Left ventricle myocardium inferior (tissue), 1 donor: ENCODE measurements at regions of chr20 and their contacts with region 1.

Region 1: DNA sequence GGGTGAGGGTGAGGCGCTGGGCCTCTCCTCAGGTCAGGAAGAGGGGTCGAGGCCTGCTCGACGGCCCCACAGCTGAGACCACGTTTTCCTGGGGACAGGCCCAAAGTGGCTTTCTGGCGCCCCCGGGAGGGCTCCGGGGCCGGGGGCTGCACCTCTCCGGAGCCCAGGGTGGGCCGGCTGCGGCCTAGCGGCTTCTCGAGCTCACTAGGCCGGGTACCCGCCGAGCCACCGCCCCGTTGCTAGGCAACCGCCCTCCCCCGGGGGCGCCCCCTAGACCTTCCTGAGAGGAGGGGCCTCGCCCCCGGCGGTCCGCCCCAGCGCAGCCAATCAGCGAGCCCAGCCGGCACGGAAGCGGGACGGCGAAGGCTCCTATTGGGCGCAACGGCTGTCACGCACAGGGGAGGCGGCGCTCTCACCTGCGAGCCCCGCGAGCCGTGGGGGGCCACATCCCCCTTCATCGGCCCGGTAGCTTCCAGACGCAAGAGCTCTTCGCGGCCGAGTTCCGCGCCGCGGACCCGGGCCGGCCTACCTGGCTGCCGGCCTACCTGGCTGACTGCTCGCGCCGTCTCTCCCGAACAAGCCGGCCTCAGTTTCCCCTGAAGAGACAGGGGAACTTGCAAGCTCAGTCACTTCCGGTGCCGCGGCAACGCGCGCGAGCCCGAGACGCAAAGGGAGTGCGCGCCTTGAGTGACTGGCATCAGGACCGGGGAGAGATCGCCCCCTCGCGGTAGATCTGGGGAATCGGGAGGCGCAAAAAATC is 831 bp upstream of the BCL2L1 start:
- DNase-seq: peak; percentile 99
- H3K4me3 ChIP-seq: peak overlapping the region; percentile 85
- H3K27ac ChIP-seq: peak overlapping the region; percentile 99
- H3K4me1 ChIP-seq: peaks cover 48% of the 10 kb centered on the region
- H3K27me3 ChIP-seq: no peaks in the 10 kb centered on the region
- CTCF ChIP-seq: peak; percentile 94

Region 2: DNA sequence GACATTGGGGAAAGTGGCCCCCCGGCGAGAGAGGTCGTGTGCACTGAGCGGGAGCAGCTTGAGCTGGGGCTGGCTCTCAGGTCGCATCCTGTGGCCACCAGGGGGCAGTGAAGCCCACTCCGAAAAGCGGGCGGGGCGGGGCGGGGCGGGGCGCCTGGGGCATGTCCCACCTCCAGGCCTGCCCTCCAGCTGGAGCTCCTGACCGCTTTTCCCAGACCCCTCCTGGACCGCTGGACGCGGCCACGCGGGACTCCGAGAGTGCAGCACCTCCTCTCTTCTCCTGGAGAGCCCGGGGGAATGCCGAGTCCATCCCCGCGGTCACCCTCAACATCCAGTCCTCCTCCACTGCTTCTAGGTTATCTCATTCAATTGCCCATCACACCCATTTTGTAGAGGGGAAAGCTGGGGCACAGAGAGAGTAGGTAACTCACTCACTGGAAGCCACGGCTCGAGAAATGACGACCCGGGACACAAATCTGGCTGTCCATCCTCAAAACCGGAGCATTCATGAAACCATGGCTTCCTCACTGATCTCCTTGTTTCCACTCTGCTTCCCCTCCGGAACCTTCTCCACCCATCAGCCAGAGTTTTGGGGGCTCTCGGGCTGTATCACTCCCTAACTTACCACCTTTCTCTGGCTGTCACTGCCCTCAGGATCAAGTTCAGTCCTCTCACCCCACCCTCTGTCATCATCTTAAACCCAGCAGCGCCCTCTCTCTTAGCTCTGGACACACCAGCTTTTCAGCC is 61.7 kb before region 1 on chr20:
- intact Hi-C with region 1: loop called (anchors 2 kb)
- DNase-seq: peak; percentile 86
- H3K4me3 ChIP-seq: peak overlapping the region; percentile 59
- H3K27ac ChIP-seq: peak overlapping the region; percentile 85
- H3K4me1 ChIP-seq: peaks cover 53% of the 10 kb centered on the region
- H3K27me3 ChIP-seq: no peaks in the 10 kb centered on the region
- CTCF ChIP-seq: peak; percentile 84

Region 3: GRCh38 chr20:31674895-31675827 is 48.3 kb before region 1 on chr20:
- intact Hi-C with region 1: loop called (anchors 5 kb)
- DNase-seq: peak; percentile 66
- H3K4me3 ChIP-seq: peak overlapping the region; percentile 40
- H3K27ac ChIP-seq: peak overlapping the region; percentile 95
- H3K4me1 ChIP-seq: peaks cover 100% of the 10 kb centered on the region
- H3K27me3 ChIP-seq: no peaks in the 10 kb centered on the region
- CTCF ChIP-seq: no peak